Activated T-helper 2 cell treated with anti-CD3 and anti-CD28 coated beads, Interferon-gamma antibody, Interleukin-2, Interleukin-4, amounts not matched to agents 10 μg/mL and 5 μg/mL and 100 μg/mL, durations not matched to agents 14 hours and 24 hours and 36 hours (primary cell): ENCODE measurements at regions of chr1 and their contacts with region 1.

Region 1: GRCh38 chr1:26602378-26602959 is 72.9 kb downstream of the RPS6KA1 start:
- DNase-seq: no peak
- H3K4me3 Mint-ChIP-seq: no peak overlapping the region
- H3K27ac Mint-ChIP-seq: no peak overlapping the region
- H3K4me1 Mint-ChIP-seq: peaks cover 14% of the 10 kb centered on the region
- H3K27me3 Mint-ChIP-seq: peaks cover 4% of the 10 kb centered on the region

Region 2: GRCh38 chr1:26864610-26865527 is 262.4 kb after region 1 on chr1:
- intact Hi-C with region 1: loop called (anchors 5 kb)
- DNase-seq: peak; percentile 95
- H3K4me3 Mint-ChIP-seq: peak overlapping the region; percentile 93
- H3K27ac Mint-ChIP-seq: peak overlapping the region; percentile 90
- H3K4me1 Mint-ChIP-seq: peaks cover 20% of the 10 kb centered on the region
- H3K27me3 Mint-ChIP-seq: no peaks in the 10 kb centered on the region